ENCODE measurements at regions of chr15 and their contacts with region 1.

Region 1: GRCh38 chr15:75201609-75202250 is at the start of gene C15orf39:
- DNase-seq: peak; percentile 67 to 84 (median 81)
- H3K4me3 ChIP-seq: peak within 1 kb of the TSS; percentile 96
- H3K4me3 Mint-ChIP-seq: peak within 1 kb of the TSS; percentile 87 to 97 (median 94)
- H3K27ac ChIP-seq: peak within 1 kb of the TSS; percentile 86
- H3K27ac Mint-ChIP-seq: peak within 1 kb of the TSS; percentile 92 to 98 (median 94)
- H3K4me1 ChIP-seq: peaks cover 41% of the 10 kb centered on the region
- H3K4me1 Mint-ChIP-seq: peaks cover 34 to 63% (median 41%) of the 10 kb centered on the region in 3 donors
- H3K27me3 ChIP-seq: no peaks in the 10 kb centered on the region
- H3K27me3 Mint-ChIP-seq: peaks cover 0 to 1% of the 10 kb centered on the region in 2 donors
- total RNA-seq, gene C15orf39: 29.8 to 32.0 TPM

Region 2: GRCh38 chr15:75023181-75023871 is 178.4 kb before region 1 on chr15 and contains the start of gene PPCDC:
- CTCF ChIA-PET with region 1: interaction called, 57 read pairs
- POLR2A ChIA-PET with region 1: interaction called, 10 read pairs
- DNase-seq: peak; percentile 86 to 96 (median 91)
- H3K4me3 ChIP-seq: peak within 1 kb of the TSS; percentile 84
- H3K4me3 Mint-ChIP-seq: peak within 1 kb of the TSS; percentile 91 to 97 (median 94)
- H3K27ac ChIP-seq: peak within 1 kb of the TSS; percentile 82
- H3K27ac Mint-ChIP-seq: peak within 1 kb of the TSS; percentile 74 to 97 (median 90)
- H3K4me1 ChIP-seq: peaks cover 12% of the 10 kb centered on the region
- H3K4me1 Mint-ChIP-seq: peaks cover 17 to 23% (median 23%) of the 10 kb centered on the region in 3 donors
- H3K27me3 ChIP-seq: no peaks in the 10 kb centered on the region
- H3K27me3 Mint-ChIP-seq: peaks cover 0 to 1% of the 10 kb centered on the region in 2 donors
- total RNA-seq, gene PPCDC: 35.5 to 39.2 TPM

Region 3: GRCh38 chr15:75029378-75030022 is 172.2 kb before region 1 on chr15:
- CTCF ChIA-PET with region 1: interaction called, 57 read pairs
- POLR2A ChIA-PET with region 1: interaction called, 6 read pairs
- DNase-seq: peak; percentile 73 to 89 (median 83)
- H3K4me3 ChIP-seq: no peak overlapping the region
- H3K4me3 Mint-ChIP-seq: no peak overlapping the region
- H3K27ac ChIP-seq: no peak overlapping the region
- H3K27ac Mint-ChIP-seq: peak overlapping the region in 2 of 8 donors; percentile 68 to 90
- H3K4me1 ChIP-seq: peaks cover 7% of the 10 kb centered on the region
- H3K4me1 Mint-ChIP-seq: peaks cover 10 to 22% (median 15%) of the 10 kb centered on the region in 3 donors
- H3K27me3 ChIP-seq: no peaks in the 10 kb centered on the region
- H3K27me3 Mint-ChIP-seq: no peaks in the 10 kb centered on the region

Region 4: GRCh38 chr15:75042730-75043508 is 158.8 kb before region 1 on chr15:
- CTCF ChIA-PET with region 1: interaction called, 10 read pairs
- POLR2A ChIA-PET with region 1: interaction called, 8 read pairs
- DNase-seq: peak; percentile 17 to 79 (median 45)
- H3K4me3 ChIP-seq: no peak overlapping the region
- H3K4me3 Mint-ChIP-seq: peak overlapping the region in 5 of 7 donors; percentile 5 to 71 (median 62)
- H3K27ac ChIP-seq: peak overlapping the region; percentile 49
- H3K27ac Mint-ChIP-seq: peak overlapping the region; percentile 59 to 97 (median 90)
- H3K4me1 ChIP-seq: peaks cover 21% of the 10 kb centered on the region
- H3K4me1 Mint-ChIP-seq: peaks cover 43 to 54% (median 47%) of the 10 kb centered on the region in 3 donors
- H3K27me3 ChIP-seq: no peaks in the 10 kb centered on the region
- H3K27me3 Mint-ChIP-seq: no peaks in the 10 kb centered on the region

Measured in CD8-positive, alpha-beta memory T cell (primary cell).